Activated CD8-positive, alpha-beta T cell treated with anti-CD3 and anti-CD28 coated beads for 36 hours (primary cell): ENCODE measurements at regions of chr1 and their contacts with region 1.

Region 1: DNA sequence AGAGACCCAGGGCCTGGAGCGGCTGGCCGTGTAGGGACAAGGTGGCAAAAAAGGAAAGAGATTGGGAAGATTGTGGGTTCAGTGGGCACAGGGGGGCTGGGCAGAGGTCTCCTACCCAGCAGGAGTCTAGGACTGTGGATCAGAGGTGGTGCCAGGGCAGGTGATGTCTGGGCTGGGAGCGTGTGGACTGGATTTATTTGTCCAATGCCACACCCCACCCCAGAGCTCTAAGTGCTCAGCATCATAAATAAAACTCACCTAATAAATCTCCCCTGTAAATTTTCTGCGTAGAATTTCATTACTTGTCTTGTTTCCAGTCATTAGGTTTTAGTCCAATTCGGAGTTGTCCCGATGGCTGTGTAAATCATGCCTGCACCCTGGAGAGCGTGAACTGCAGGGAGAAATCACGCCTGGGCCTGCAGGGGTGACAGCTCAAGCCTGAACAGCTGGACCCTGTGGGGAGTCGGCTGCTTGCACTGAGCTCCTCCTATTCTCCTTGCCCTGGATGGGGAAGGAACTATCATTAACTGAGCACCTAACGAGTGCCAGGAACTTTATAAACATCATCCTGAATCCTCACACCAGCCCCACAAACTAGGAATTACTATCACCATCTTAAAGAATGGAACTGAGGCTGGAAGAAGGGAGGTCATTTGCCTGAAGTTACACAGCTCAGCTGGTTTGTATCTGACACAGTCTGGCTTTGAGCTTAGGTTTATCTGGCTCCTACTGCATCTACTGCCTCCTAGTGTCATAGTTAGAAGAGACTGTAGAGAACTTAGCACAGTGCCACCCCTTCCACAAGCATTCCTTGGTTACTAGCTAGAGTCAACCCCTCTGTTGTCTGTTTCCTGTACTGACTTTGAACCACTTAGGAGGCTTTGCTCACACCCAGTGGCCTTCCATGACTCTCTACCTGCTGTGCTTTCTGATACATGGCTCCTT is 25.0 kb upstream of the POU3F1 start:
- DNase-seq: no peak
- ATAC-seq: peak; percentile 80
- H3K4me3 Mint-ChIP-seq: no peak overlapping the region
- H3K27ac Mint-ChIP-seq: no peak overlapping the region
- H3K4me1 Mint-ChIP-seq: no peaks in the 10 kb centered on the region
- H3K27me3 Mint-ChIP-seq: peaks cover 36% of the 10 kb centered on the region
- CTCF ChIP-seq: no peak

Region 2: GRCh38 chr1:38018864-38019343 is 52.7 kb before region 1 on chr1:
- CTCF ChIA-PET with region 1: interaction called, 105 read pairs
- POLR2A ChIA-PET with region 1: no interaction called
- intact Hi-C with region 1: no loop called
- DNase-seq: no peak
- ATAC-seq: peak; percentile 79
- H3K4me3 Mint-ChIP-seq: no peak overlapping the region
- H3K27ac Mint-ChIP-seq: no peak overlapping the region
- H3K4me1 Mint-ChIP-seq: peaks cover 29% of the 10 kb centered on the region
- H3K27me3 Mint-ChIP-seq: no peaks in the 10 kb centered on the region
- CTCF ChIP-seq: peak; percentile 41

Region 3: DNA sequence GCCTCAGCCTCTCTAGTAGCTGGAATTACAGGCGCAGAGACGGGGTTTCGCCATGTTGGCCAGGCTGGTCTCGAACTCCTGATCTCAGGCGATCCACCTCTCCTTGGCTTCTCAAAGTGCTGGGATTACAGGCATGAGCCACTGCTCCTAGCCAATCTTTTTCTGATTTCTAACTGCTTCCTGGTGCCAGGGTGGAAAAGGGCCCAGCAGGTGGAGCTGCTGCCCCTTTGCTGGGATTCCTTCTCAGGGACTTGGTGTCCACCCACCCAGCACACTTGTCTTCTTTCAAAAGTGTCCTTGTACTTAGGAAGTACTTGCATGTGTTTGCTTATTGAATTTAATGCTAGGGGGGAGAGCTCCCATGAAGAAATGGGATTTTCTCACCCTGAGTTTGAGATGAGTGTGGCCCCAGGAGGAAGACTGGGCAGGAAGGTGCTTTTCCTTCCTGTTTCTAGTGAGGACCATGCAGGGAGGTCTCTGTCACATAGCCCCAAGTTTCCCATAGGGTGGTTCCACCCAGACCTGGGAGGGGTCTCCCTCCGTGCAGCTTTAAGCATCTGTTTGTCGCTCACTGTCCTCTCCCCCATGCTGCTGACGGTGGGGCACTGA is 44.9 kb before region 1 on chr1:
- CTCF ChIA-PET with region 1: interaction called, 105 read pairs
- POLR2A ChIA-PET with region 1: no interaction called
- intact Hi-C with region 1: no loop called
- DNase-seq: peak; percentile 76
- ATAC-seq: no peak
- H3K4me3 Mint-ChIP-seq: no peak overlapping the region
- H3K27ac Mint-ChIP-seq: no peak overlapping the region
- H3K4me1 Mint-ChIP-seq: peaks cover 55% of the 10 kb centered on the region
- H3K27me3 Mint-ChIP-seq: no peaks in the 10 kb centered on the region
- CTCF ChIP-seq: peak; percentile 71

Region 4: GRCh38 chr1:38037221-38037939 is 34.2 kb before region 1 on chr1:
- CTCF ChIA-PET with region 1: interaction called, 10 read pairs
- POLR2A ChIA-PET with region 1: interaction called, 4 read pairs
- intact Hi-C with region 1: no loop called
- DNase-seq: no peak
- ATAC-seq: no peak
- H3K4me3 Mint-ChIP-seq: no peak overlapping the region
- H3K27ac Mint-ChIP-seq: no peak overlapping the region
- H3K4me1 Mint-ChIP-seq: no peaks in the 10 kb centered on the region
- H3K27me3 Mint-ChIP-seq: peaks cover 24% of the 10 kb centered on the region
- CTCF ChIP-seq: no peak

Region 5: DNA sequence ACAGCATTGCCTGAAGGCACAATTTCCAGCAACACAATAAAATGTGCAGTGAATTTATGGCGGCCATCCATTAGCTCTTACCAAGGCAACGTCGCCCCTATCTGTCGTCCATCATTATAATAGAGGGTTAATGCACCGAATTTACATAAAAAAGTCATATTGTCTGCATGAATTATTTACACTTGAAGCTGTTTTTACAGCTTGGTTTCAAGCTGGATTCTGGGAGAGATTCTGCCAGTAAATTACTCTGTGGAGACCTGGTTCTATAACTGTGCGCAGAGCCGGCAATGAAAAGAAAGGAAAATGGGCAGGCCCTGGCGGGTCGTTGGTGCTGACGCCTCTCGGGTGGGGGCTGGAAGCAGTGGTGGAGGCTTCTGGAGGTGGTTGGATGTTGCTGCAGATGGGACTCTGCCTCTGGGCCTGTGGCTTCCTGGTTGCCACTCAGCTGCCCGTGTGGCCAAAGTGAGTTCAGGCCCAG is 23.9 kb after region 1 on chr1:
- CTCF ChIA-PET with region 1: no interaction called
- POLR2A ChIA-PET with region 1: no interaction called
- intact Hi-C with region 1: no loop called
- DNase-seq: no peak
- ATAC-seq: no peak
- H3K4me3 Mint-ChIP-seq: no peak overlapping the region
- H3K27ac Mint-ChIP-seq: no peak overlapping the region
- H3K4me1 Mint-ChIP-seq: no peaks in the 10 kb centered on the region
- H3K27me3 Mint-ChIP-seq: peaks cover 21% of the 10 kb centered on the region
- CTCF ChIP-seq: no peak

Region 6: GRCh38 chr1:38123391-38123992 is 51.9 kb after region 1 on chr1:
- CTCF ChIA-PET with region 1: no interaction called
- POLR2A ChIA-PET with region 1: no interaction called
- intact Hi-C with region 1: no loop called
- DNase-seq: no peak
- ATAC-seq: no peak
- H3K4me3 Mint-ChIP-seq: no peak overlapping the region
- H3K27ac Mint-ChIP-seq: no peak overlapping the region
- H3K4me1 Mint-ChIP-seq: no peaks in the 10 kb centered on the region
- H3K27me3 Mint-ChIP-seq: no peaks in the 10 kb centered on the region
- CTCF ChIP-seq: no peak

Region 7: DNA sequence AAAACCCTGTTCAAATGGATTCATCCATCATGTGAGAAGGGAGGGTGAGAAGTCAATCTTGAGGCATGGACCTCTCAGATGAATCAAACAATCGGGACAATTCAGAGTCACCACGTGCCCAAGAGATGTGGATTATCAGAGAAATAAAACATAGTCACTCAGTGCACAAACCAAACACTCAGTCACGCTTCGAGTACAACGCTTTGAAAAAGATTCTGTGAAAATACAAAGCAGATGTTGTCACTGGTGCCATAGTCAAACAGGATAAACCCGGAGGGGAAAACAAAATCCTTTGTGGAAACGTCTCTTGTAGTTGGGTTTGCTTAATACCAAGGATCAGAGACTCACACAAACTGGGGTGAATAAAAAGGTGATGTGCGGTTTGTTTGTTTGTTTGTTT is 599.6 kb after region 1 on chr1:
- CTCF ChIA-PET with region 1: no interaction called
- POLR2A ChIA-PET with region 1: no interaction called
- intact Hi-C with region 1: no loop called
- DNase-seq: no peak
- ATAC-seq: no peak
- H3K4me3 Mint-ChIP-seq: no peak overlapping the region
- H3K27ac Mint-ChIP-seq: no peak overlapping the region
- H3K4me1 Mint-ChIP-seq: no peaks in the 10 kb centered on the region
- H3K27me3 Mint-ChIP-seq: peaks cover 23% of the 10 kb centered on the region
- CTCF ChIP-seq: no peak